K562 (cell line): ENCODE measurements at regions of chrX and their contacts with region 1.

Region 1: DNA sequence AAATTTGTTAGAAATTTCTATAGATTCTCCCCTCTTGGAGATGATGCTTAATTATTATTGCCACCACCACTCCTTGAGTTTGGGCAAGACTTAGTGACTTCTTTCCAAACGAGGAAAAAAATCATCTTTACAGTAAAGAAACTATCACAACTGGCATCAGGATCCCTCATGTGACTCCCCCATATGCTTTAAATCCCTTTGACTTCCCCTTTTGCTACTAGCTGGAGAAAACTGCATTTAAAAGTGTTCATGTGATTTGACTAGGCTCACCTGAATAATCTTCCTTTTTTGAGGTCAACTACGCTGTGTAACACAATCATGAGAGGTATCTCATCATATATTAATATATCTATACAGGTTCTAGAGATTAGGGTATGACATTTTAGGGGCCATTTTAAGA is 30.3 kb upstream of the ENOX2 start:
- DNase-seq: no peak
- ATAC-seq: no peak
- H3K4me3 ChIP-seq: no peak overlapping the region
- H3K27ac ChIP-seq: no peak overlapping the region
- H3K4me1 ChIP-seq: no peaks in the 10 kb centered on the region
- H3K27me3 ChIP-seq: no peaks in the 10 kb centered on the region
- CTCF ChIP-seq: no peak
- EP300 ChIP-seq: no peak
- POLR2A ChIP-seq: no peak
- RAD21 ChIP-seq: no peak

Region 2: DNA sequence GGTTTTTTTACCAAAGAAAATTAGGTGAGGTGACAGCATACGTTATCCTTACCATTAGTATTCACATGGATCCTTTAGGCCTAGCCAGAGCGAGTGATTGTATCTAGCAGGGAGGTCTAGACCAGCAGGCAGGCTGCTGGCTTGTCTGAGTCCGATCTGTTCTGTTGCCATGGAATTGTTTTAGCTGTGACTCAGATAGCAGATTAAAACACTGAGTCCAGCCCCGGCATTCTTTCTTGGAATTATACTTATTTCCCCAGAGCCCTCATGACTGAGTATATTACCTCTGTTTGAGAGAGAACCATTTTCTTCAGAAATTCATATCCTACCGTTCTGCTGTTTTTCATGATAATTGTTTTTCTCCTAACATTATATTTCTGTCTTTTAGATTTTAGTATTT is 1355.9 kb before region 1 on chrX:
- CTCF ChIA-PET with region 1: no interaction called
- POLR2A ChIA-PET with region 1: no interaction called
- in situ Hi-C with region 1: loop called (anchors 25 kb)
- intact Hi-C with region 1: no loop called
- DNase-seq: peak; percentile 22 to 80 (median 48)
- ATAC-seq: peak; percentile 96
- H3K4me3 ChIP-seq: no peak overlapping the region
- H3K27ac ChIP-seq: peak overlapping the region; percentile 71
- H3K4me1 ChIP-seq: peaks cover 6 to 18% of the 10 kb centered on the region in 2 experiments; a peak in 3 of 5 replicates
- H3K27me3 ChIP-seq: no peaks in the 10 kb centered on the region
- CTCF ChIP-seq: no peak
- EP300 ChIP-seq: no peak; the same call in 1 of the 2 replicates
- POLR2A ChIP-seq: no peak
- RAD21 ChIP-seq: no peak